ENCODE measurements at regions of chr5 and their contacts with region 1.

Region 1: DNA sequence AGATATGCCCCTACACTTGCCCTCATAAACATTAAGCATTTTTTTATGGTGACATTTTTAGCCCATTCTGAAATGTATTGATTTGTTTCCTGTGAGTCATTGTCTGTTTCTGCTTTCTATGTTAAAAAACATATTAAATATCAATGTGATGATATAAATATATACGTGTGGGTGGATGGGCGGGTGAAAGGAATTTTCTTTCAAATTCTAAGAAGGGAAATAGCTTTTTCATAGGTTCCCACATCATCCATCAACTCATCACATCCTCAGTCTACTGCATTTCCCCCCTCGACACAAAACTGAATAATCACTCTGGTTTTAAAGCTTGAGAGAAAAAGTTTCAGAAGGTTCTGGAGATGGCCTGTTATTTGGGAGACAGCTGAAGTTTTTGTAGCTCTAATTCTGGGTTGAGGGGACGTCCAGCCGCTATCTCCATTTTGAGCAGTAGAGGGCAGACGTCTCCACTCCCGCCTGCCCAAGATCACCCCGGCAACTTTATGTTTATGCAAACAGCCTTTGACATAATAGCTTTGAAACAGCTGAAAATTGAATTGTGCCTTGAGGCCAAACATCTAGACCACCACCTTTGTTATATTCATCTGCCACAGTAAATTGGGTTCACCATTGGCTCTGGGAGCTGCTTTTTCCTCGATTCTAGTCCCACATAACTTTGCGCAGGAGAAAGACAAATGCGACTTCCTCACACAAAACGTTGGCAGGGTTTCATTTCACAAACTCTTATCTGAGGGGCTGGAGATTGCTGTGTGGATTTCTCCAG is 216.2 kb upstream of the CLINT1 start:
- DNase-seq: peak; percentile 48
- ATAC-seq: peak; percentile 95
- H3K4me3 Mint-ChIP-seq: peak overlapping the region; percentile 42
- H3K27ac Mint-ChIP-seq: peak overlapping the region; percentile 73
- H3K4me1 Mint-ChIP-seq: peaks cover 20% of the 10 kb centered on the region
- H3K27me3 Mint-ChIP-seq: peaks cover 2% of the 10 kb centered on the region
- CTCF ChIP-seq: no peak

Region 2: DNA sequence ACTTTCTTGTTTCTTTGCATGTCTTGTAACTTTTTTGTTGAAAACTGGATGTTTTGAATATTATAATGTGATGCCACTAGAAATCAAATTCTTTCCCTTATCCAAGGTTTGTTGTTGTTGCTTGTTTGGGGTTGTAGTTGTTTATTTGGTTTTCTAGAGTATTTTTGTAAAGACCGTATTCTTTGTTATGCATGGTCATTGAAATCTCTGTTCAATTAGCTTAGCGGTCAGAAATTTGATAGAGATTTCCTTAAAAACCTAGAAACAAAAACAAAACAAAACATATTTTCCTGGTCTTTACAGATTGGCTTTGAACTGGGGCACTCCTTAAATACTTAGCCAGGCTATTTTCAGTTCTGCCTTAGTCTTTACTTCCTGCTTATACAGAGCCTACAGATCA is 444.8 kb before region 1 on chr5:
- CTCF ChIA-PET with region 1: no interaction called
- POLR2A ChIA-PET with region 1: no interaction called
- intact Hi-C with region 1: no loop called
- DNase-seq: no peak
- ATAC-seq: no peak
- H3K4me3 Mint-ChIP-seq: no peak overlapping the region
- H3K27ac Mint-ChIP-seq: no peak overlapping the region
- H3K4me1 Mint-ChIP-seq: peaks cover 8% of the 10 kb centered on the region
- H3K27me3 Mint-ChIP-seq: no peaks in the 10 kb centered on the region
- CTCF ChIP-seq: no peak

Region 3: DNA sequence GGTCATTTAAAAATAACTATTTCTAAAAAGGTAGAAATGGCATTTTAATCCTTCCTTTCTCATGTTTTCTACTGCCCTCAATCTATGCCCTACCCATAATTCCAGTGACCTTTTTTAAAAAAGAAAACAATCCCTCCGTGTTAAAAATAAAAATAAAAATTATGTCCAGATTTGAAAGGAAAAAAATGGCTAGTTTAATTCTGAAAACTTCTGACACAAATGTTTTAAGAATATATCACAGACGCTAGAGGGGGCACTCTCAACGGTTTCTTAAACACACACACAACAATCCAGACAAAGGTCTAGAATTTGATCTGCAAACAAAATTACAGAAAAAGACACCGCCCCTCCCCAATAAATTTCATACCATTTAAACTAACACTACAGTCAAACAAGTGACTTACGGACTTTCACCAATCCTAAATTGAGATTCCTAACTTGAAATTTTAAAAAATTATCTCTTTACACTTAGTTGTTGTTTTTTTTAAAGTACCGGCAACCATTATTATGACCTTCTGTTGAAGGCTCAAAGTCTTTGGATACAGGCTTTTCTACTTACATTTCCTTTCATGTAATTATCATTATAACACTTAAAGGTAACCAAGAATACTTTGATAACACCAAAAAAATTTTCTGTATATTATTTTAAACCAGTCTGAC is 254.5 kb before region 1 on chr5:
- CTCF ChIA-PET with region 1: interaction called, 8 read pairs
- POLR2A ChIA-PET with region 1: no interaction called
- intact Hi-C with region 1: loop called (anchors 10 kb)
- DNase-seq: no peak
- ATAC-seq: no peak
- H3K4me3 Mint-ChIP-seq: no peak overlapping the region
- H3K27ac Mint-ChIP-seq: peak overlapping the region; percentile 12
- H3K4me1 Mint-ChIP-seq: peaks cover 25% of the 10 kb centered on the region
- H3K27me3 Mint-ChIP-seq: no peaks in the 10 kb centered on the region
- CTCF ChIP-seq: no peak

Region 4: DNA sequence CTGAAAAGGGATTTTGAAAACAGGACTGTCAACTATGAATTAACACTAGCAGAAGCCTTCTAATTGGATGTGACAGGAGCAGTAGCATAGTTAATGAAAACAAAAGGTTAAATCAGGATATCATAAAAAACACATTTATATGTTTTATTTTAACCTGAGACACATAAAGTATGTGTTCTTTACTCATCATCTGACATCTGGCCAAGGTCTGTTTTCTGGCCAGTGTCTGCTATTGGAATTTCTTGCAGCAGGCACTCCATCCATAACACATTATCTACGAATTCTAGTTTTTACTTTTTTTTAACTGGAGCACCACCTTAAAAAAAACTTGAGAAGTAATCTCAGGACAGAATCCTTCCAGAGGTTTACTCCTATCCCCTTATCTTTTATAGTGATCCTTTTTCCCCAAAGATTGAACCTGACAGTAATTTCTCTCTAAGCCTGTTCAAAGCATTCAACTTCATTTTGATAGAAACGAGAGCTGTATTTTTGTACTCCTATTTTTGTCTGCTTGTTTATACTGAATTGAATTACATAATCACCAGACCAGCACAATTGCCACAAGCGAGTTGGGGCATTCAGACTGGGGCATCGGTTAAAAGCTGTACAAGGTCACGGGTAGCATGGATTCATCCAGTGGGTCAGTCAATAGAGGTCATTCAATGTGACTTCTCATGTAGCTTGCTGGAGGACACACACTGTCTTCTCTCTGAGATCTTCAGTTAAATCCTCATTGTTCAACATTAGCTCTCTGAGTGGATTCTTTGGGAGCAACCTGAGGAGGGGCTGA is 10.7 kb before region 1 on chr5:
- CTCF ChIA-PET with region 1: interaction called, 10 read pairs
- POLR2A ChIA-PET with region 1: no interaction called
- intact Hi-C with region 1: no loop called
- DNase-seq: no peak
- ATAC-seq: no peak
- H3K4me3 Mint-ChIP-seq: no peak overlapping the region
- H3K27ac Mint-ChIP-seq: no peak overlapping the region
- H3K4me1 Mint-ChIP-seq: no peaks in the 10 kb centered on the region
- H3K27me3 Mint-ChIP-seq: peaks cover 5% of the 10 kb centered on the region
- CTCF ChIP-seq: no peak

Region 5: GRCh38 chr5:158170060-158170459 is 94.9 kb after region 1 on chr5:
- CTCF ChIA-PET with region 1: interaction called, 18 read pairs
- POLR2A ChIA-PET with region 1: no interaction called
- intact Hi-C with region 1: loop called (anchors 1 kb)
- DNase-seq: no peak
- ATAC-seq: no peak
- H3K4me3 Mint-ChIP-seq: no peak overlapping the region
- H3K27ac Mint-ChIP-seq: no peak overlapping the region
- H3K4me1 Mint-ChIP-seq: peaks cover 29% of the 10 kb centered on the region
- H3K27me3 Mint-ChIP-seq: no peaks in the 10 kb centered on the region
- CTCF ChIP-seq: no peak

Region 6: DNA sequence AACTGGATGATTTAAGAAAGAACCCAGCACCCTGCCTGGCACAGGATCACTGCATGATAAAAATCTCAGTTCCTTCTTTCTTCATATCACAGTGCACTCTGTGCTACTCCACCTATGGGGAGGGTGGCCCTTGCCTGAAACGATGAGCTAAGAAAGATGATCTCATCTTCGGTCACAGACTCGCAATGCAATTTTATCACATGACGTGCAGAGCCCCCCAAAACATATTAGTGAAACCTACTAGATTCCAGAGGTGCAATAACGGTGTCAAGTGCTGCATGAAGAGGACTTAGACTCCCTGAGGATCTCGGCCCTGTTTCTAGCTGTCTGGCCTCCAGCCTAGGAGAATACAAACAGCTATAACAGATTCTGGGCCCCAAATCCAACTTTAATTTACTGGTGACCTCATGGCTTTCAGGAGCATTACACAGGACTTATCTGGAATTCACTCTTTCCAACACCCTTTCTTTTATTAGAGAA is 920.6 kb after region 1 on chr5:
- CTCF ChIA-PET with region 1: no interaction called
- POLR2A ChIA-PET with region 1: no interaction called
- intact Hi-C with region 1: loop called (anchors 10 kb)
- DNase-seq: no peak
- ATAC-seq: peak; percentile 94
- H3K4me3 Mint-ChIP-seq: peak overlapping the region; percentile 1
- H3K27ac Mint-ChIP-seq: peak overlapping the region; percentile 76
- H3K4me1 Mint-ChIP-seq: peaks cover 56% of the 10 kb centered on the region
- H3K27me3 Mint-ChIP-seq: no peaks in the 10 kb centered on the region
- CTCF ChIP-seq: no peak